Gastrocnemius medialis (tissue), 4 donors: ENCODE measurements at regions of chr17 and their contacts with region 1.

Region 1: GRCh38 chr17:4986951-4987766 is at the start of gene CAMTA2:
- DNase-seq: peak; percentile 84 to 90
- ATAC-seq: peak; percentile 92
- H3K4me3 ChIP-seq: peak within 1 kb of the TSS; percentile 76 to 100 (median 94)
- H3K27ac ChIP-seq: peak within 1 kb of the TSS; percentile 88 to 98 (median 96)
- H3K4me1 ChIP-seq: peaks cover 17 to 20% of the 10 kb centered on the region in 2 donors
- H3K27me3 ChIP-seq: no peaks in the 10 kb centered on the region
- CTCF ChIP-seq: peak; percentile 80 to 96 (median 94)
- POLR2A ChIP-seq: peak; percentile 89 to 91
- total RNA-seq, gene CAMTA2: 19.1 to 46.4 (median 36.4) TPM

Region 2: DNA sequence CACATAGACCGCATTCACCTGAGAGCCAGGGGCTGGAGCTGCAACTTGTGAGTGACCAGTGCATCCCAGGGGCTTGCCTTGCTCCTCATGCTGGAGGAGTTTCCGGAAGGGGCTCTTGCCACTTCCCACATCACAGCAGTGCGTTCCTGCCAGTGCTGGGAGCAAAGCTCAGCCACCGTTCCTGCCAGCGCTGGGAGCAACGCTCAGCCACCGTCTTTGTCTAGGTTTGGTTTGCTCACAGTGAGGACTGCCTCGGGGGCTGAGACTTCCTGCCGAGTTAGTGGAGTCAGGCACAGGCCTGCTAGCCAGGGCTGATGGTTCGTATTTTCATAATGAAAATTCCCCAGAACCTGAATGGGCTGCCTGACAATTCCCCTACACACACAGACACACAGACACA is 78.9 kb before region 1 on chr17:
- in situ Hi-C with region 1: loop called (anchors 5 to 10 kb)
- intact Hi-C with region 1: loop called (anchors 1 kb)
- DNase-seq: no peak
- ATAC-seq: no peak
- H3K4me3 ChIP-seq: no peak overlapping the region
- H3K27ac ChIP-seq: peak overlapping the region; percentile 50 to 77 (median 76)
- H3K4me1 ChIP-seq: peaks cover 13 to 14% of the 10 kb centered on the region in 2 donors
- H3K27me3 ChIP-seq: no peaks in the 10 kb centered on the region
- CTCF ChIP-seq: no peak
- POLR2A ChIP-seq: no peak

Region 3: DNA sequence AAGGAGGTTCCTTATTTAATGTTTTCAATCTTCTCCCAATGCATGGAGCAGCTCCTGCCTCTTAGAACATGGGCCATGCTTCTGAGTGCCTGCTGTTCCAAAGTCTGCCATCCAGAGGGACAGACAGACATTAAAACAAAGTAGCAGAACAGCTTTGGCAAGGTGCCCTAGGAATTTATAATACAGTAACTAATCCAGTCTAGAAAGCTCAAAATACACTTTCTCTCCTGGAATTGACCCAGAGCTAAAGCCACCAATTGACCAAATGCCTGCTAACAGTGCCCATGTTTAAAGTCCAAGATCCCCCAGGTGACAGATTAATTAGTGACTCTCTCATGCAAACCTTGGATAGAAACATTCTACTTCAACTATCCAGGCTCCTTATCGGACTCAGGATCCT is 73.2 kb before region 1 on chr17:
- in situ Hi-C with region 1: loop called (anchors 5 to 10 kb)
- intact Hi-C with region 1: loop called (anchors 1 kb)
- DNase-seq: no peak
- ATAC-seq: no peak
- H3K4me3 ChIP-seq: no peak overlapping the region
- H3K27ac ChIP-seq: no peak overlapping the region
- H3K4me1 ChIP-seq: peaks cover 4 to 6% of the 10 kb centered on the region in 2 donors
- H3K27me3 ChIP-seq: no peaks in the 10 kb centered on the region
- CTCF ChIP-seq: no peak
- POLR2A ChIP-seq: no peak

Region 4: GRCh38 chr17:4966844-4967538 is 20.2 kb before region 1 on chr17:
- in situ Hi-C with region 1: no loop called
- intact Hi-C with region 1: loop called (anchors 1 kb)
- DNase-seq: peak; percentile 100
- ATAC-seq: peak; percentile 85 to 90
- H3K4me3 ChIP-seq: peak overlapping the region; percentile 70 to 87 (median 75)
- H3K27ac ChIP-seq: peak overlapping the region; percentile 88 to 95 (median 94)
- H3K4me1 ChIP-seq: peaks cover 27 to 34% of the 10 kb centered on the region in 2 donors
- H3K27me3 ChIP-seq: no peaks in the 10 kb centered on the region
- CTCF ChIP-seq: peak in 1 of 5 experiments; percentile 3
- POLR2A ChIP-seq: peak; percentile 47 to 68